AG04449 (cell line): ENCODE measurements at regions of chr6 and their contacts with region 1.

Region 1: DNA sequence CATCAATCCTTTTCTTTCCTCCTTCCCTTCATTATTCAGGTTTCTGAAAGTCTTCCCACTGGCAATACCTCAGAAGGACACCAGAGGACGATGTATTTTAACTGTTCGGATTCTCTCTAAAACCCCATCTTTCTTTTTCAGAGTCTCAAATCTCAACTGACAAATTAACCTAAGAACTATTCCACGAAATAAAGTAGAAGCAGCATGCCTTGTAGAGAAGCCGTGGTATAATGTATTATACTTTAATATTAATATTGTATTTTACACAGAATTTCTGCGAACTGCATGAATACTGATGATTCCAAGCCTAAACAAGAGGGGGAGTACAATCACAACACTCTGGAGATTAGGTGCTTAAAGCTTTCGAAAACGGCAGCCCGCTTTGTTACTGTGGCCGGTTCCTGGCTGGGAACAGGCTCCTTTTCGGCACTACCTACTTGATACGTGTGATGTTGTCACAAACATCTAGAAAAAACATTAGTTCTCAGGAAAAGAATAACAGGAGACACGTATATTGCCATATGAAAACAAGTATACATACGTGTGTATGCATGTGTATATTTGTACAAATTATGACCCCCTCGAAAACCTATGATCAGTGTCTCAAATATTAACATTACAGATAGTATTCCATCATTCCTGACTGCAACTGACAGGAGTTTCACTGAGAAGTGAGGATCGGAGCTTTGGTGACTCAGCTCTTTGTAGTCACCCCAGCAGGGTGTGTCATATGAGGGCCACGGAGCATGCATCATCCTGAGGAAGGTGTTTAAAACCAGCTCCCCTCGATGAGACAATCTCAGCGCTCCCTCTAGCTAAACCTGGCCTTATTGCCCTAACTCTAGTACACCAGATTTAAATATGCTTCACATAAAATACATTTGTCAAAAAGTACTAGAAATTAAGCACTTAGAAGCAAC is 319.7 kb upstream of the TCF21 start:
- DNase-seq: peak; percentile 50
- H3K4me3 ChIP-seq: peak overlapping the region; percentile 46
- CTCF ChIP-seq: peak; percentile 76

Region 2: DNA sequence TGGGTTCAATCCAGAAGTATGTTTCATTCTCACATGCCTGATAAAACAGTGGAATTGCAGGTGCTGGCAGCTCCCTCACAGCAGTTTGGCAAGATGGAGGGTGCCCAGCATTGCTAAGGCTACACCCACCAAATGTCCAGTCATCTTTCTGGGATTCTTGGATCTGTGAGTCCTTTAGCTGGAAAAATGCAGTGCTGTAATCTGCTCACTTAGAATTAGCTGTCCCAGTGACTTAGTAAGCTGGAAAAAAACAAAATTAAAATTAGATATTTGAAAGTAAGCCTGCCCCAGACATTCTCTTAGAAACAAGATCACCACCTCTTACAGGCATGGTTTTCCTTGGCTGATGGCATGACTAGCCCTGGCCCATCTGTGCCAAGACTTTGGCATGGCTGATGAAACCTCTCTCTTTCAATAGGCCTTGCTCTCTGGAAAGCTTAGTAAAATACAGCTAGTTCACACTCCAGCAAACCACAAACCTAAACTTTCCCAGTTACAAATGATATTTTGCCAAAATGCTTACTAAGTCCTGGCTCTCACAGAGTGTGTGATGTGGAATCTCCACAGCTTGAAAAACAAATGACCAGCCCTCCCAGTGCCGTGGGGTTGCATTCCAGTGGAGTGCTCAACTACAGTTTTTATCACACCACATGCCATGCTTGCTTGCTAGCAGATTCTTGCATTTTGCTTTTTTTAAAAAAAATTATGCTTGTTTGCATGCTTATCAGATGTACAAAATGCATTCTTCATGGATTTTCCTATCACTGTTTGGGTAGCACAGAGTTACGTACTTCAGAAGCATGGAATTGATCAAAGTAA is 66.6 kb before region 1 on chr6:
- CTCF ChIA-PET with region 1: no interaction called
- POLR2A ChIA-PET with region 1: no interaction called
- DNase-seq: peak; percentile 90
- H3K4me3 ChIP-seq: no peak overlapping the region
- CTCF ChIP-seq: no peak

Region 3: GRCh38 chr6:133584823-133585222 is 15.6 kb after region 1 on chr6:
- CTCF ChIA-PET with region 1: interaction called, 25 read pairs
- POLR2A ChIA-PET with region 1: no interaction called
- DNase-seq: no peak
- H3K4me3 ChIP-seq: no peak overlapping the region
- CTCF ChIP-seq: no peak

Region 4: GRCh38 chr6:133631421-133631820 is 62.2 kb after region 1 on chr6:
- CTCF ChIA-PET with region 1: interaction called, 16 read pairs
- POLR2A ChIA-PET with region 1: no interaction called
- DNase-seq: no peak
- H3K4me3 ChIP-seq: no peak overlapping the region
- CTCF ChIP-seq: peak; percentile 23

Region 5: GRCh38 chr6:133764008-133764753 is 195.0 kb after region 1 on chr6:
- CTCF ChIA-PET with region 1: interaction called, 31 read pairs
- POLR2A ChIA-PET with region 1: no interaction called
- DNase-seq: no peak
- H3K4me3 ChIP-seq: no peak overlapping the region
- CTCF ChIP-seq: no peak

Region 6: GRCh38 chr6:133827766-133828165 is 258.5 kb after region 1 on chr6:
- CTCF ChIA-PET with region 1: interaction called, 166 read pairs
- POLR2A ChIA-PET with region 1: no interaction called
- DNase-seq: peak; percentile 50
- H3K4me3 ChIP-seq: no peak overlapping the region
- CTCF ChIP-seq: no peak

Region 7: DNA sequence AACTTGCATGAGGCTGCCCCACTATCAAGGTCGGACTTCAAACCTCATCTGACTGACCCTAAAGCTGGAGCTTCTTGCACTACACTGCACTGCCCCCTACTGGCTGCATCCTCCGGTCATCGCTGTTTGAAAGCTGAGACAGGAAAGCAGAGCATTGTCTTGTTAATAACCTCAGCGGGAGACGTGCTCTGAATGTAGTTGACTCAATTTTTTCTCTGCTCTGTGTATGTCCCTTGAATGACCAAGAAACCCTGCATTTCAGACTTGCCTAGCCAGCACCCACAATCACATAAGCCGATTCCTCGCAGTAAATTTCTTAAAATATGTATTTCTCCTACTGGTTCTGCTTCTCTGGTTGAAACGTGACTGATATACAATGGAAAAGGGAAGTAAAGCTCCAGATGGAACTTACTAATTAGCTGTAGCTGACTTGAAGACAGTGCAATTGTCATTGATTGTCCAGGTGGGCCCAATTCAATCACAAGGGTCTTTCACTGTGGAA is 347.5 kb after region 1 on chr6:
- CTCF ChIA-PET with region 1: interaction called, 270 read pairs
- POLR2A ChIA-PET with region 1: no interaction called
- DNase-seq: peak; percentile 71
- H3K4me3 ChIP-seq: no peak overlapping the region
- CTCF ChIP-seq: peak; percentile 91

Region 8: GRCh38 chr6:134247231-134247833 is 678.1 kb after region 1 on chr6:
- CTCF ChIA-PET with region 1: no interaction called
- POLR2A ChIA-PET with region 1: no interaction called
- DNase-seq: no peak
- H3K4me3 ChIP-seq: no peak overlapping the region
- CTCF ChIP-seq: no peak